ENCODE measurements at regions of chr1 and their contacts with region 1.

Region 1: GRCh38 chr1:197614916-197615692 is 160.2 kb downstream of the DENND1B start:
- DNase-seq: peak; percentile 36 to 44
- H3K4me3 ChIP-seq: no peak overlapping the region
- H3K4me3 Mint-ChIP-seq: no peak overlapping the region
- H3K27ac Mint-ChIP-seq: no peak overlapping the region
- H3K4me1 ChIP-seq: no peaks in the 10 kb centered on the region; the same call in 1 of the 2 replicates
- H3K4me1 Mint-ChIP-seq: no peaks in the 10 kb centered on the region
- H3K27me3 ChIP-seq: no peaks in the 10 kb centered on the region
- H3K27me3 Mint-ChIP-seq: no peaks in the 10 kb centered on the region
- CTCF ChIP-seq: peak; percentile 56 to 77

Region 2: GRCh38 chr1:197567442-197567841 is 47.7 kb before region 1 on chr1:
- CTCF ChIA-PET with region 1: no interaction called
- POLR2A ChIA-PET with region 1: no interaction called
- intact Hi-C with region 1: no loop called
- DNase-seq: no peak
- H3K4me3 ChIP-seq: no peak overlapping the region
- H3K4me3 Mint-ChIP-seq: no peak overlapping the region
- H3K27ac Mint-ChIP-seq: no peak overlapping the region
- H3K4me1 ChIP-seq: no peaks in the 10 kb centered on the region
- H3K4me1 Mint-ChIP-seq: no peaks in the 10 kb centered on the region
- H3K27me3 ChIP-seq: no peaks in the 10 kb centered on the region
- H3K27me3 Mint-ChIP-seq: no peaks in the 10 kb centered on the region
- CTCF ChIP-seq: no peak

Region 3: GRCh38 chr1:197692965-197693364 is 77.9 kb after region 1 on chr1:
- CTCF ChIA-PET with region 1: interaction called, 5 read pairs
- POLR2A ChIA-PET with region 1: no interaction called
- intact Hi-C with region 1: loop called (anchors 1 kb)
- DNase-seq: no peak
- H3K4me3 ChIP-seq: no peak overlapping the region
- H3K4me3 Mint-ChIP-seq: no peak overlapping the region
- H3K27ac Mint-ChIP-seq: no peak overlapping the region
- H3K4me1 ChIP-seq: no peaks in the 10 kb centered on the region
- H3K4me1 Mint-ChIP-seq: no peaks in the 10 kb centered on the region
- H3K27me3 ChIP-seq: no peaks in the 10 kb centered on the region
- H3K27me3 Mint-ChIP-seq: no peaks in the 10 kb centered on the region
- CTCF ChIP-seq: peak in 1 of 2 experiments; percentile 24

Region 4: DNA sequence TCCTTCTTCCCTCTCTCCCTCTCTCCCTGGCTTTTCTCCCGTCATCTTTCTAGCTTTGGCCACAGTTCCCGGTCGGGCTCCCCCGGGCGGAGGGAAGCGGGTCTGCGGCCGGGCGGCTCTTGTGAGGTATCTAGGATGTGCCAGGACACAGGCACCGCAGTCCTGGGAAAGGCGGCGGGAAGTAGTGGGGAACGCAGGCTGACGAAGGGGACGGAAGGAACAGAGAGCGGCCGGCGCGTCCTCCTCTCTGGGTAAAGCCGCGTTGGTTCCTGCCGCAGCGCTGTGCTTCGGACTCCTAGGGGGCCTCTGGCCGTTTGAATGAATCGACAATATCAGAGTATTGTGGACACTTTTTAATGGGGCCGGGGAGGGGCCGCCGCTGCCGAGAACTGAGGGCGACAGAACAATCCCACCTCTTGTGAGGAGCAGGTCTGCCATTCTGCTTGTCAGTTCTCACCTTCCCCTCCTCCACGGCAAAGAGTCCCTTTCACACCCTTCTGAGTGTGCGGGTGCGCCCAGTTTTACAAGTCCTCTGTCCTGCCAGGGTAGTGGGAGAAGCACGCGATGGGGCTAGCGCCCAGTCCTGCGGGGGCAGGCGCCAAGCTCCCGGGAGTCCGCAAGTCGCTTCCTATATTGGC is 300.9 kb after region 1 on chr1:
- CTCF ChIA-PET with region 1: interaction called, 4 read pairs
- POLR2A ChIA-PET with region 1: no interaction called
- intact Hi-C with region 1: loop called (anchors 2 kb)
- DNase-seq: peak; percentile 76 to 81
- H3K4me3 ChIP-seq: peak overlapping the region; percentile 24
- H3K4me3 Mint-ChIP-seq: peak overlapping the region; percentile 81
- H3K27ac Mint-ChIP-seq: no peak overlapping the region
- H3K4me1 ChIP-seq: peaks cover 18% of the 10 kb centered on the region; the same call in 1 of the 2 replicates
- H3K4me1 Mint-ChIP-seq: peaks cover 25% of the 10 kb centered on the region
- H3K27me3 ChIP-seq: peaks cover 2% of the 10 kb centered on the region; the same call in 1 of the 2 replicates
- H3K27me3 Mint-ChIP-seq: peaks cover 40% of the 10 kb centered on the region
- CTCF ChIP-seq: peak; percentile 62 to 81

Region 5: GRCh38 chr1:198465201-198466144 is 850.4 kb after region 1 on chr1:
- CTCF ChIA-PET with region 1: no interaction called
- POLR2A ChIA-PET with region 1: no interaction called
- intact Hi-C with region 1: loop called (anchors 1 kb)
- DNase-seq: peak in 1 of 2 experiments; percentile 50
- H3K4me3 ChIP-seq: no peak overlapping the region
- H3K4me3 Mint-ChIP-seq: no peak overlapping the region
- H3K27ac Mint-ChIP-seq: no peak overlapping the region
- H3K4me1 ChIP-seq: no peaks in the 10 kb centered on the region
- H3K4me1 Mint-ChIP-seq: no peaks in the 10 kb centered on the region
- H3K27me3 ChIP-seq: no peaks in the 10 kb centered on the region
- H3K27me3 Mint-ChIP-seq: peaks cover 2% of the 10 kb centered on the region
- CTCF ChIP-seq: peak; percentile 53 to 58

Measured in Caco-2 (cell line).